ENCODE measurements at regions of chr12 and their contacts with region 1.

Region 1: DNA sequence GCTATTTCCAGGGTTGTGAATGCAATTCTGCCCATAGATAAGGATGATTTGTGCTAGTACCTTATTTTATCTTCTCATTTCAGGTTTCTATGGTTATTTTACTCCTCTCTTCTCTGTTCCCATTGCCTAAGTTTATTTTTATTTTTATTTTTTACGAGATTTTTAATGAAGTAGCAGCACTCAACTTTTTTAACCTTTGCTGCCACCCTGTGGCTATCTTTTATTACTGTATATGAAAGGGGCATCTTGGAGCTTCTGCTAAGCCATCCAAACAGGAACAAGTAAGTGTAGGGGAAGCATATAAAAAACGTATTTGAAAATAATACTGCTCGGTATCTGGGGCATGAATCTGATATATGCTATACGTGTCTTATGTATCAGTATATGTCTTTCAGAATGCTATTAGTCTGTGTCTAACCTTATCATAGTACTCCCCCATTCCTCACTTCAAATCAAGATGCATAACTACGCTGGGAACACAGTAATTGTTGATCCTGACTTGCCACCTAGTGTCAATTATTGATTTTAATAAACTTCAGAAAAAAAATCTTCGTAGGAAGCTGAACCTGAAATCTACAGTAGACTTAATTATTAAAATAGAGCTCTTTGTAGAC is 60.3 kb downstream of the KLRG1 start:
- DNase-seq: peak; percentile 39
- CTCF ChIP-seq: peak; percentile 43

Region 2: DNA sequence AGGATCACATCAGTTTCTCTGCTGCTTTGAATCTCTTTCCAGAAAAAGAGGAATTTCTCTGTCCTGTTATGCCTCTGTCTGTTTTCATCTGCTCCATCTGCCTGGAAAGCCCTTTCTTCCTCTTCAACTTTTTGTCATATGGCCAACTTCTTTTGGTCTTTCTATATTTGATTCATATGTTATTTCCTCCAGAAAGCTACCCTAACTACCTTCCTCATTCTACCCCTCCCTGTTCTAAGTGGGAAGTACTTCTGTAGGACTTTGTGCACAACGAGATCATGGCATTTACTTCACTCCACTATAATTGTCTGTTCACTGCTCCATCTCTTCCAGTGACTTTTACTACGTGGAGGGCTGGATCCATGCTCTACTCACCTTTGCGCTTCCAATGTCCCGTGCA is 530.5 kb before region 1 on chr12:
- in situ Hi-C with region 1: no loop called
- DNase-seq: no peak
- CTCF ChIP-seq: no peak

Region 3: GRCh38 chr12:8662593-8662992 is 387.0 kb before region 1 on chr12 and contains the start of gene MFAP5:
- in situ Hi-C with region 1: loop called (anchors 10 kb)
- DNase-seq: no peak
- CTCF ChIP-seq: no peak

Region 4: DNA sequence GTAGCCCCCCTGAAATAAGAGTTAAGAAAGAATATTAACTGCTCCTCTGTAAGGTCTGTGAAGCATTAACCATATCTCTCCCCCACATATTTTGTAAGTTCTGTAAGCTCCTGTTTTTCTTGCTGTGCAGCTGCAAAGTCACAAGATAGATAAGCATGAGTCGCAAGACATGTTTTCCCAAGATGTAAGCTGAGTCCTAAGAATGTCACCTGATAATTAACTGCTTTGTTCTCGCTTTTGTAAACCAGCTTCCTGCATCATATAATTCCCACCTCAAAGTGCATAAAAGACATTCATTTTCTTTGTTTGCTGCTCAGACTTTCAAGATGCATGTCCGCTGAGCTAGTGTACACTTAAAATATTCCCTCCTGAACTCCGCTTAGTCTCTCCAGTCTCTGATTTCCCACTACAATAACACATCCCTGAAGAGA is 162.3 kb before region 1 on chr12:
- in situ Hi-C with region 1: loop called (anchors 10 kb)
- DNase-seq: no peak
- CTCF ChIP-seq: no peak

Region 5: DNA sequence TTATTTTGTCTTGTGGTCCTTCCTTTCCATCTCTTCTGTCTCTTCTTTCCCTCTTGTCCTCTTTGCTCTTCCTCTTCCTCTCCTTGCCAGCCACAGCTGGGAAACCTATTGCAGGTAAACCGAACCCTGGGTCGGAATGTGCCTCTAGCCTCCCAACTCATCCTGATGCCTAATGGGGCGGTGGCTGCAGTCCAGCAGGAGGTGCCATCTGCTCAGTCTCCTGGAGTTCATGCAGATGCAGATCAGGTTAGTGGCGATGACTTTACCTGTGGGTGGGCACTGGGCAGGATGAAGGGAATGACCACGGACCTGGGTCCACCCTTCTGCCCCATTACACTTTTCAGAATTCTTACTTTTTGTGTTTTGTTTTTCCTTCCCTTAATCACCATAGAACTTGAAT is 127.1 kb before region 1 on chr12:
- in situ Hi-C with region 1: loop called (anchors 10 kb)
- DNase-seq: no peak
- CTCF ChIP-seq: no peak

Measured in GM13977 (cell line).